B cell (primary cell): ENCODE measurements at regions of chr7 and their contacts with region 1.

Region 1: DNA sequence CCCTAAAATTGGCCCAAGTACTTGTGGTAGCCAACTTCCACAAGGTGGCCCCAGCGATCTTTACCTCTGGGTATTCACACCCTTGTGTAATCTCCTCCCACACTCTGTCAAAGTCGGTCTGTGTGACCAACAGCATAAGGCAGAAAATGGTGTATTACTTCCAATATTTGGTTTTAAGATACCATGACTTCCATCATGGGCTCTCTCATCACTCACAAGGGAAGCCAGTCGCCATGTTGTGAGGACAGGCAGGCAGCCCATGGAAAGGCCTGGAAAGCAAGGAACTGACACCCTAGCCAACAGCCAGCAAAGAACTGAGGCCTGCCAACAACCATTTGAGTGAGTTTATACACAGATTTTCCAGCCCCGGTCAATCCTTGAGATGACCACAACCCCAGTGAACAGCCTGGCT is 91.0 kb upstream of the KMT2E start:
- DNase-seq: peak; percentile 88
- ATAC-seq: peak; percentile 99
- H3K4me3 ChIP-seq: no peak overlapping the region
- H3K4me3 Mint-ChIP-seq: no peak overlapping the region
- H3K27ac ChIP-seq: peak overlapping the region; percentile 20 to 56
- H3K27ac Mint-ChIP-seq: peak overlapping the region; percentile 82
- H3K4me1 ChIP-seq: peaks cover 6 to 8% of the 10 kb centered on the region in 2 donors
- H3K4me1 Mint-ChIP-seq: peaks cover 7% of the 10 kb centered on the region
- H3K27me3 ChIP-seq: no peaks in the 10 kb centered on the region
- H3K27me3 Mint-ChIP-seq: no peaks in the 10 kb centered on the region
- CTCF ChIP-seq: peak; percentile 89

Region 2: DNA sequence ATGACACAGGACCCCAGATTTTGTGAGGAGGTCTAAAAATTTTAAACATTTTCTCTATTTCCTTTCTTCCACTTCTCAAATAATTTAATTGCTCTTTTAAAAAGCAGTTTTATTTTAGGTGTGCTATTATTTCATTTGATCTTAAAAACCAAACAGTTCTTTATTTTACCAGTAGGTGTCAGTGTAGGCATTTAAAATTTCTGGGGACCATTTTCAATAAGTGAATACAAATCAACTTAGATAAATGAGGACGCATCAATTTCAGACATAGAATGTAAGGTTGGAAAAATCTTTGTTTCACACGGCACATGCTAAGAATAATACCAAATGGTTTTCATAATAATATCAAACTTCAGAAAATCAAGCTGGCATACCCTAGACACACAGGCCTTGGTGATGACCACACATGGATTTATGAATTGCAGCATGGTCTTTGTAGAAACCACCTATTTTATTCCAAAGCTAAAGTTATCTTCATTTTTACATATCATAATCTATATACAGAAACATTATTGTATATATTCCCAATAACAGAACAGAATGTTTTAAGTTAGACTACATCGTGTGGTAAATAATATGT is 1349.4 kb before region 1 on chr7:
- CTCF ChIA-PET with region 1: interaction called, 37 read pairs
- POLR2A ChIA-PET with region 1: no interaction called
- intact Hi-C with region 1: no loop called
- DNase-seq: peak; percentile 43
- ATAC-seq: no peak
- H3K4me3 ChIP-seq: no peak overlapping the region
- H3K4me3 Mint-ChIP-seq: no peak overlapping the region
- H3K27ac ChIP-seq: no peak overlapping the region
- H3K27ac Mint-ChIP-seq: no peak overlapping the region
- H3K4me1 ChIP-seq: no peaks in the 10 kb centered on the region
- H3K4me1 Mint-ChIP-seq: no peaks in the 10 kb centered on the region
- H3K27me3 ChIP-seq: no peaks in the 10 kb centered on the region
- H3K27me3 Mint-ChIP-seq: peaks cover 15% of the 10 kb centered on the region
- CTCF ChIP-seq: peak; percentile 84

Region 3: DNA sequence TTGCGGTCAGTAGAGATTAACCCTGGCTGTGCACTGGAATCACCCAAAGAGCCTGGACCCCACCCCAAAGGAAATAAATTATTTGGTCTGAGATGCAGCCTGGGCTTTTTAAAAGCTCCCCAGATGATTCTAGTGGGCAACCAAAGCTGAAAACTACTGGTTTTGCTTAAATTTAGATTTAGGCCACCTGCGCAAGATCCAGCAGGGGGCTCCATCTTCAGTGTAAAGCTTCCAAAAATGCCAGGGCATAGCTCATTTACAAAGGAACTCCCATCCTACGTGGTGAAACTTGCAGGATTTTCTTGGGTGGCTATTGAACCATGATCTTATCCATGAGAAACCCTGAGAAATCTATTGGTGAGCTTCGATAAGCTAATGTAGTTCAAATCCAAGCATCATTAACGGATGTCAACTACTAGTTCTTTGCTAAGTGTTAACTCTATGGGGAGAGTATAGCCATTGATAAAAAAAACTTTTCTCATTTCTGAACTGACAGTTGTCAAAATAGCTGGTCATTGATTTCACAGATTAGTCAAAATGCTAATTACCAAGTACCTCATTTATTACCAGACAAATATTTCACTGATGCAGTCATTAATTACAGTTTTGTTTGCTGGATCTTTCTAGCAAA is 279.3 kb before region 1 on chr7:
- CTCF ChIA-PET with region 1: interaction called, 3 read pairs
- POLR2A ChIA-PET with region 1: no interaction called
- intact Hi-C with region 1: loop called (anchors 5 kb)
- DNase-seq: no peak
- ATAC-seq: no peak
- H3K4me3 ChIP-seq: no peak overlapping the region
- H3K4me3 Mint-ChIP-seq: no peak overlapping the region
- H3K27ac ChIP-seq: no peak overlapping the region
- H3K27ac Mint-ChIP-seq: no peak overlapping the region
- H3K4me1 ChIP-seq: no peaks in the 10 kb centered on the region
- H3K4me1 Mint-ChIP-seq: no peaks in the 10 kb centered on the region
- H3K27me3 ChIP-seq: no peaks in the 10 kb centered on the region
- H3K27me3 Mint-ChIP-seq: peaks cover 26% of the 10 kb centered on the region
- CTCF ChIP-seq: no peak

Region 4: GRCh38 chr7:104943502-104944343 is 20.7 kb after region 1 on chr7:
- CTCF ChIA-PET with region 1: interaction called, 26 read pairs
- POLR2A ChIA-PET with region 1: interaction called, 10 read pairs
- intact Hi-C with region 1: loop called (anchors 1 kb)
- DNase-seq: peak; percentile 73
- ATAC-seq: peak; percentile 18
- H3K4me3 ChIP-seq: peak overlapping the region; percentile 68 to 83 (median 76)
- H3K4me3 Mint-ChIP-seq: peak overlapping the region; percentile 93
- H3K27ac ChIP-seq: peak overlapping the region; percentile 99
- H3K27ac Mint-ChIP-seq: peak overlapping the region; percentile 100
- H3K4me1 ChIP-seq: peaks cover 66 to 78% of the 10 kb centered on the region in 2 donors
- H3K4me1 Mint-ChIP-seq: peaks cover 70% of the 10 kb centered on the region
- H3K27me3 ChIP-seq: no peaks in the 10 kb centered on the region
- H3K27me3 Mint-ChIP-seq: no peaks in the 10 kb centered on the region
- CTCF ChIP-seq: no peak

Region 5: GRCh38 chr7:104983578-104984539 is 60.8 kb after region 1 on chr7:
- CTCF ChIA-PET with region 1: interaction called, 248 read pairs
- POLR2A ChIA-PET with region 1: interaction called, 10 read pairs
- intact Hi-C with region 1: loop called (anchors 1 kb)
- DNase-seq: peak; percentile 91
- ATAC-seq: peak; percentile 88
- H3K4me3 ChIP-seq: peak overlapping the region; percentile 48 to 87 (median 80)
- H3K4me3 Mint-ChIP-seq: peak overlapping the region; percentile 99
- H3K27ac ChIP-seq: peak overlapping the region in 1 of 2 donors; percentile 96
- H3K27ac Mint-ChIP-seq: peak overlapping the region; percentile 100
- H3K4me1 ChIP-seq: peaks cover 34 to 45% of the 10 kb centered on the region in 2 donors
- H3K4me1 Mint-ChIP-seq: peaks cover 79% of the 10 kb centered on the region
- H3K27me3 ChIP-seq: no peaks in the 10 kb centered on the region
- H3K27me3 Mint-ChIP-seq: no peaks in the 10 kb centered on the region
- CTCF ChIP-seq: peak; percentile 70

Region 6: GRCh38 chr7:105036217-105037168 is 113.5 kb after region 1 on chr7:
- CTCF ChIA-PET with region 1: interaction called, 42 read pairs
- POLR2A ChIA-PET with region 1: interaction called, 6 read pairs
- intact Hi-C with region 1: loop called (anchors 1 kb)
- DNase-seq: no peak
- ATAC-seq: no peak
- H3K4me3 ChIP-seq: no peak overlapping the region
- H3K4me3 Mint-ChIP-seq: no peak overlapping the region
- H3K27ac ChIP-seq: peak overlapping the region in 1 of 2 donors; percentile 58
- H3K27ac Mint-ChIP-seq: peak overlapping the region; percentile 22
- H3K4me1 ChIP-seq: peaks cover 27 to 36% of the 10 kb centered on the region in 2 donors
- H3K4me1 Mint-ChIP-seq: peaks cover 47% of the 10 kb centered on the region
- H3K27me3 ChIP-seq: no peaks in the 10 kb centered on the region
- H3K27me3 Mint-ChIP-seq: no peaks in the 10 kb centered on the region
- CTCF ChIP-seq: no peak

Region 7: GRCh38 chr7:105429746-105430612 is 507.0 kb after region 1 on chr7:
- CTCF ChIA-PET with region 1: interaction called, 8 read pairs
- POLR2A ChIA-PET with region 1: interaction called, 3 read pairs
- intact Hi-C with region 1: loop called (anchors 5 kb)
- DNase-seq: peak; percentile 68
- ATAC-seq: peak; percentile 67
- H3K4me3 ChIP-seq: no peak overlapping the region
- H3K4me3 Mint-ChIP-seq: no peak overlapping the region
- H3K27ac ChIP-seq: no peak overlapping the region
- H3K27ac Mint-ChIP-seq: peak overlapping the region; percentile 17
- H3K4me1 ChIP-seq: no peaks in the 10 kb centered on the region
- H3K4me1 Mint-ChIP-seq: peaks cover 8% of the 10 kb centered on the region
- H3K27me3 ChIP-seq: no peaks in the 10 kb centered on the region
- H3K27me3 Mint-ChIP-seq: no peaks in the 10 kb centered on the region
- CTCF ChIP-seq: peak; percentile 70